ENCODE measurements at regions of chr13 and their contacts with region 1.

Region 1: GRCh38 chr13:95834134-95834765 is 157.3 kb downstream of the DNAJC3 start:
- DNase-seq: peak; percentile 74

Region 2: DNA sequence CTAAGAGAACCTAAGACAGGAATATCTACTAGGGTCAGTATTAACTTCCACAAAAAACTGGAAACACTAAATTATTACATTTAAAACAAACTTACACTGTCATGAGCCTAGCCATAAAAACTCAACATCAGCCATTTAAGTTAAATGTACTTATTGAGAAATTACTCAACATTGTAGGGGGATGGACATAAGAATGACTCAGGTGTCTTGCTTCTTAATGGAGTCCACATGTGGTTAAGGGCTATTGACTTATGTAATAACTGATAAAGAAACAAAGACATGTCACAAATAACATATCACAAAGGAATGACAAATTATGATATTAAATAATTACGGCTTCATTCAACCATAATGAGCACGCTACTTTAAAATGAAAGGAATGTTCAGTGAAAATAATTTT is 245.5 kb before region 1 on chr13:
- in situ Hi-C with region 1: loop called (anchors 10 kb)
- DNase-seq: no peak

Region 3: DNA sequence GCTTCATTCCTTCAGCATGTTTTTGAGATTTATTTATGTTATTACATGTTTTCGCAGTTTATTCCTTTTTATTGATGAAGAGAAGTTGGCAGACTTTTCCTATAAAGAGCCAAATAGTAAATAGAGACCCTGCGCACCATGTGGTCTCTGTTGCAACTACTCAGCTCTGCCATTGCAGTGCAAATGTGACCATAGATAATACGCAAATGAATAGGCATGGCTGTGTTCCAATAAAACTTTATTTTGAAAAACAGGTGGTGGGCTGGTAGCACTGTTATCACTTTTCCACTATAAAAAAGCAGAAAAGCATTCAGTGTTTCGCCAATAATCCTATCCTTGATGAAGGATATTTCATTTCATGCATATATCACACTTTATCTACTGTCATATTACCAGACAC is 62.3 kb before region 1 on chr13:
- in situ Hi-C with region 1: no loop called
- DNase-seq: no peak